ENCODE measurements at regions of chr4 and their contacts with region 1.

Region 1: GRCh38 chr4:52028969-52029368 is 8.8 kb upstream of the LRRC66 start:
- DNase-seq: no peak
- H3K4me3 Mint-ChIP-seq: no peak overlapping the region
- H3K27ac Mint-ChIP-seq: no peak overlapping the region
- H3K4me1 Mint-ChIP-seq: no peaks in the 10 kb centered on the region
- H3K27me3 Mint-ChIP-seq: no peaks in the 10 kb centered on the region

Region 2: GRCh38 chr4:51831133-51831532 is 197.8 kb before region 1 on chr4:
- CTCF ChIA-PET with region 1: interaction called, 3 read pairs
- POLR2A ChIA-PET with region 1: no interaction called
- intact Hi-C with region 1: loop called (anchors 1 kb)
- DNase-seq: peak; percentile 74
- H3K4me3 Mint-ChIP-seq: no peak overlapping the region
- H3K27ac Mint-ChIP-seq: no peak overlapping the region
- H3K4me1 Mint-ChIP-seq: no peaks in the 10 kb centered on the region
- H3K27me3 Mint-ChIP-seq: peaks cover 13% of the 10 kb centered on the region

Region 3: GRCh38 chr4:51895813-51896408 is 133.1 kb before region 1 on chr4:
- CTCF ChIA-PET with region 1: no interaction called
- POLR2A ChIA-PET with region 1: no interaction called
- intact Hi-C with region 1: loop called (anchors 10 kb)
- DNase-seq: peak; percentile 62
- H3K4me3 Mint-ChIP-seq: no peak overlapping the region
- H3K27ac Mint-ChIP-seq: no peak overlapping the region
- H3K4me1 Mint-ChIP-seq: peaks cover 12% of the 10 kb centered on the region
- H3K27me3 Mint-ChIP-seq: no peaks in the 10 kb centered on the region